Caco-2 (cell line): ENCODE measurements at regions of chrX and their contacts with region 1.

Region 1: GRCh38 chrX:30504309-30504708 is 73.3 kb downstream of the TASL start:
- DNase-seq: no peak
- H3K4me3 ChIP-seq: no peak overlapping the region
- H3K4me3 Mint-ChIP-seq: no peak overlapping the region
- H3K27ac Mint-ChIP-seq: no peak overlapping the region
- H3K4me1 ChIP-seq: no peaks in the 10 kb centered on the region
- H3K4me1 Mint-ChIP-seq: no peaks in the 10 kb centered on the region
- H3K27me3 ChIP-seq: no peaks in the 10 kb centered on the region
- H3K27me3 Mint-ChIP-seq: peaks cover 3% of the 10 kb centered on the region
- CTCF ChIP-seq: peak in 1 of 2 experiments; percentile 49

Region 2: DNA sequence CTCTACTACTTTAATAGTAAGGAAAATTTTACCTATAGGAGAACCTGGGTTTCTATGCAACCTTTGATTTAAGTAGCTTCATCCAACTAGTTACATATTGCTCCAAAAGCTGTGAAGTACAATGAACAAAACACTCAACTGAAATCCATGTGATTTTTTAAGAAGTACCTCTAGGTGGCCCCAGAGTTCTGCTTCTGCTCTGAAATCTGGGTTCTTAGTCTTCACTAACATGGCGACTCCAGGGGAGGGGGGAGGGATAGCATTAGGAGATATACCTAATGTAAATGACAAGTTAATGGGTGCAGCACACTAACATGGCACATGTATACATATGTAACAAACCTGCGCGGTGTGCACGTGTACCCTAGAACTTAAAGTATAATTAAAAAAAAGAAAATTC is 362.3 kb before region 1 on chrX:
- CTCF ChIA-PET with region 1: interaction called, 6 read pairs
- POLR2A ChIA-PET with region 1: no interaction called
- intact Hi-C with region 1: loop called (anchors 2 kb)
- DNase-seq: peak; percentile 12 to 30
- H3K4me3 ChIP-seq: no peak overlapping the region
- H3K4me3 Mint-ChIP-seq: no peak overlapping the region
- H3K27ac Mint-ChIP-seq: no peak overlapping the region
- H3K4me1 ChIP-seq: peaks cover 10% of the 10 kb centered on the region; the same call in 1 of the 2 replicates
- H3K4me1 Mint-ChIP-seq: peaks cover 7% of the 10 kb centered on the region
- H3K27me3 ChIP-seq: no peaks in the 10 kb centered on the region
- H3K27me3 Mint-ChIP-seq: no peaks in the 10 kb centered on the region
- CTCF ChIP-seq: peak in 1 of 2 experiments; percentile 29

Region 3: GRCh38 chrX:30275498-30275897 is 228.8 kb before region 1 on chrX:
- CTCF ChIA-PET with region 1: no interaction called
- POLR2A ChIA-PET with region 1: no interaction called
- intact Hi-C with region 1: loop called (anchors 1 kb)
- DNase-seq: peak in 1 of 2 experiments; percentile 0
- H3K4me3 ChIP-seq: no peak overlapping the region
- H3K4me3 Mint-ChIP-seq: no peak overlapping the region
- H3K27ac Mint-ChIP-seq: no peak overlapping the region
- H3K4me1 ChIP-seq: no peaks in the 10 kb centered on the region
- H3K4me1 Mint-ChIP-seq: no peaks in the 10 kb centered on the region
- H3K27me3 ChIP-seq: no peaks in the 10 kb centered on the region
- H3K27me3 Mint-ChIP-seq: no peaks in the 10 kb centered on the region
- CTCF ChIP-seq: peak in 1 of 2 experiments; percentile 15

Region 4: GRCh38 chrX:30343203-30343602 is 161.1 kb before region 1 on chrX:
- CTCF ChIA-PET with region 1: no interaction called
- POLR2A ChIA-PET with region 1: no interaction called
- intact Hi-C with region 1: loop called (anchors 1 kb)
- DNase-seq: peak; percentile 15 to 25
- H3K4me3 ChIP-seq: no peak overlapping the region
- H3K4me3 Mint-ChIP-seq: no peak overlapping the region
- H3K27ac Mint-ChIP-seq: no peak overlapping the region
- H3K4me1 ChIP-seq: no peaks in the 10 kb centered on the region
- H3K4me1 Mint-ChIP-seq: no peaks in the 10 kb centered on the region
- H3K27me3 ChIP-seq: no peaks in the 10 kb centered on the region
- H3K27me3 Mint-ChIP-seq: peaks cover 10% of the 10 kb centered on the region
- CTCF ChIP-seq: peak in 1 of 2 experiments; percentile 23